ENCODE measurements at regions of chr10 and their contacts with region 1.

Region 1: GRCh38 chr10:26860443-26861204 is at the start of gene ABI1:
- DNase-seq: peak; percentile 99
- H3K4me3 Mint-ChIP-seq: peak within 1 kb of the TSS; percentile 88
- H3K27ac Mint-ChIP-seq: peak within 1 kb of the TSS; percentile 98
- H3K4me1 Mint-ChIP-seq: peaks cover 32% of the 10 kb centered on the region
- H3K27me3 Mint-ChIP-seq: peaks cover 10% of the 10 kb centered on the region
- total RNA-seq, gene ABI1: 54.5 and 55.7 TPM in 2 replicates

Region 2: GRCh38 chr10:26437637-26438461 is 422.8 kb before region 1 on chr10 and contains the start of gene APBB1IP:
- intact Hi-C with region 1: loop called (anchors 2 kb)
- DNase-seq: peak; percentile 87
- H3K4me3 Mint-ChIP-seq: peak within 1 kb of the TSS; percentile 92
- H3K27ac Mint-ChIP-seq: peak within 1 kb of the TSS; percentile 95
- H3K4me1 Mint-ChIP-seq: peaks cover 37% of the 10 kb centered on the region
- H3K27me3 Mint-ChIP-seq: no peaks in the 10 kb centered on the region
- total RNA-seq, gene APBB1IP: 40.0 and 41.3 TPM in 2 replicates

Region 3: GRCh38 chr10:26737730-26738129 is 122.9 kb before region 1 on chr10:
- intact Hi-C with region 1: loop called (anchors 1 kb)
- DNase-seq: peak; percentile 83
- H3K4me3 Mint-ChIP-seq: peak overlapping the region; percentile 47
- H3K27ac Mint-ChIP-seq: peak overlapping the region; percentile 98
- H3K4me1 Mint-ChIP-seq: peaks cover 42% of the 10 kb centered on the region
- H3K27me3 Mint-ChIP-seq: no peaks in the 10 kb centered on the region

Region 4: GRCh38 chr10:26821699-26822570 is 38.7 kb before region 1 on chr10:
- intact Hi-C with region 1: loop called (anchors 5 kb)
- DNase-seq: no peak
- H3K4me3 Mint-ChIP-seq: no peak overlapping the region
- H3K27ac Mint-ChIP-seq: peak overlapping the region; percentile 39
- H3K4me1 Mint-ChIP-seq: peaks cover 24% of the 10 kb centered on the region
- H3K27me3 Mint-ChIP-seq: no peaks in the 10 kb centered on the region

Region 5: DNA sequence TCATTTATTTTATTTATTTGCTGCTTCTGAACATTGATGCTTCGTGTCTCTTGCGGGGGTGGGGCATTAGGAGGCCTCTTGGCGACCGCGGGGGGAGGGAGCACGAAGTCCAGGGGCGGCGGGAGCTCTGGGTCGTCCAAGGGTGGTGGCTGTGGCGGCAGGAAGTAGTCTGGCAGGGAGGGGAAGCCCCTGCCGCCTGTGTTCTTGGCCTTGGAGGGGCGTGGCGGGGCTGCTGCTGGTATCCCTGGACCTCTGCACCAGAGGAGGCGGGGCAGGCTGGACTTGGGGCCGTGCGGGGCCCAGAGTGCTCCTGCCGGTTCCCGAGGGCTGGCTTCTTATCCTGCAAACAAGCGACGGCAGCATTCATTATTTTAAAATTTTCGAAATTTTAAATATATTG is 70.6 kb after region 1 on chr10:
- intact Hi-C with region 1: no loop called
- DNase-seq: no peak
- H3K4me3 Mint-ChIP-seq: no peak overlapping the region
- H3K27ac Mint-ChIP-seq: no peak overlapping the region
- H3K4me1 Mint-ChIP-seq: no peaks in the 10 kb centered on the region
- H3K27me3 Mint-ChIP-seq: peaks cover 23% of the 10 kb centered on the region

Region 6: DNA sequence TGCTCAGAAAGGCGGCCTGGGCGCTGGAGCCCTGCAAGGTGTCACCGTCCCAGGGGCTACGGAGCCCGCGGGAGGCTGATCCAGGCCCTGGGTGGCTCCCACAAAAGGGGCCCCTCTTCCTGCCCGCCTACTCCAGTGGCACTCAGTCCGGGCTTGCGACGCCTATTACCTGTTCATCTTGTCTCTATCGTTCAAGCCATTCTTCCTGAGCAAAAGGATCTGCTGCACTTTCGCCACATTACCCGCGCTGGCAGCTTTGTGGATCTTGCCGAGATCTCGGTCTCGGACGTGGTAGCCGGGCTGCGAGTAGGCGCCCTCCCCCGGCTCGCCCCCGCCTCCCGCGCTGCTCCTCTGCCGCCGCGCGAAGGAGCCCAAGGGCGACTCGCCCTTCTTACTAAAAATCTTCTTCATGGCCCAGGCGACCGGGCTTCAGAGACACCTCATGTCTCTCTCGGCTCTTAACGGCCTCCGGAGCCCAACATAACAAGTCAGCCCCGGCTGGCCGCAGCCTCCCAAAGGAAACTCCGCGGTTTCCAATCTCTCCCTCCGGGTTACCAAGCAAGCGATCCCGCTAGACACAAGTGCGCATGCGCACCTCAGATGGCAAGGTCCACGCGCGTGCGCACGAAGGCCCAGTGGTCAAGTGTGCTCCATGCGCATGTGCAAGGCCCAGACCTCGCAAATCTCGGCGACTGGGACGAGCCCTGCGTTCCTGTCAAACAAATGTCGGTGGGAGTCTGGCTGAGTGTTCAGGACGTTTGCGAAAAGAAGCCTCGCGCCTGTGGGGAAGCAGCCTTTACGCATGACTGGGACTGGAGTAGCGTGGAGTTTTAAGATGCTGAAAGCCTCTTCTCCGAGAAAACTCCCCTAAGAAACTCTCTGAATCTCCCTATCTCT is 239.5 kb after region 1 on chr10 and contains the start of gene ANKRD26:
- intact Hi-C with region 1: loop called (anchors 1 kb)
- DNase-seq: peak; percentile 99
- H3K4me3 Mint-ChIP-seq: peak within 1 kb of the TSS; percentile 85
- H3K27ac Mint-ChIP-seq: peak within 1 kb of the TSS; percentile 94
- H3K4me1 Mint-ChIP-seq: peaks cover 41% of the 10 kb centered on the region
- H3K27me3 Mint-ChIP-seq: peaks cover 2% of the 10 kb centered on the region
- total RNA-seq, gene ANKRD26: 5.3 and 5.8 TPM in 2 replicates

Region 7: DNA sequence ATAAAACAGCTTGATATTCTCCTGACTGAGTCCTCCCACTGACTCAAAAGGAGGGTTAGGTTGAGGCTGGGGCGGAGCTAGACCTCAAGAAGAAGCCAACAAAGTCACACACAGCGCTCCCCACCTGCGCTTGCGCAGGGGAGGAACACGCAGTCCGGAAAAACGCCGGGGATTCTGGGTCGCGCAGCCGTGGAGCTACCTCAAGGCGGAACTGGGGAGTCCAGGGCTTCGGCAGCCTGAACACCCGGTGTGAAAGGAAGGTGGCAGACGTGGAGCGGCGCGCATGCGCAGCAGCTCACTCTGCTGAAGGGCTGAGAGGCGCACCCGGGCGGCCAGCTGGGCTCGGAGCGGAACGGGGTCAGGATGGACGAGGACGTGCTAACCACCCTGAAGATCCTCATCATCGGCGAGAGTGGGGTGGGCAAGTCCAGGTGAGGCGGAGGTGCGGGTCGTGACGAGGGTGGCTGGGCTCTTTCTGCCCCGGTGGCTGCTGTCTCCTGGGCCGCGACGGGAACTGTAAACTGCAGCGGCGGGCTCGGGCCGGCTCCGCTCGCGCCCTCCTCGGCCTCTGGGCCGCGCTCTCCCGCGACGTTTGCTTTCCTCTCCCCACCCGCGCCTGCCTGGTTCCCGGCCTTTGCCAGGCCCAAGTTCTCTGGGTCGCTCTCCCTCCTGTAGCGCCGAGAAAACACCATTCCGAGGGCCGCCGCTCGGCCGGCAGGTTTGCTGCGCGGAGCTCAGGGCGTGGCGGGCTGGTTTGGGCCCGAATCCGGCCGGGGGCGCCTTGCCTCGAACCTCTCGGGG is 643.6 kb after region 1 on chr10 and contains the start of gene RAB18:
- intact Hi-C with region 1: loop called (anchors 10 kb)
- DNase-seq: peak; percentile 99
- H3K4me3 Mint-ChIP-seq: peak within 1 kb of the TSS; percentile 99
- H3K27ac Mint-ChIP-seq: peak within 1 kb of the TSS; percentile 98
- H3K4me1 Mint-ChIP-seq: peaks cover 44% of the 10 kb centered on the region
- H3K27me3 Mint-ChIP-seq: peaks cover 6% of the 10 kb centered on the region
- total RNA-seq, gene RAB18: 55.4 and 58.3 TPM in 2 replicates